ENCODE measurements at regions of chr6 and their contacts with region 1.

Region 1: DNA sequence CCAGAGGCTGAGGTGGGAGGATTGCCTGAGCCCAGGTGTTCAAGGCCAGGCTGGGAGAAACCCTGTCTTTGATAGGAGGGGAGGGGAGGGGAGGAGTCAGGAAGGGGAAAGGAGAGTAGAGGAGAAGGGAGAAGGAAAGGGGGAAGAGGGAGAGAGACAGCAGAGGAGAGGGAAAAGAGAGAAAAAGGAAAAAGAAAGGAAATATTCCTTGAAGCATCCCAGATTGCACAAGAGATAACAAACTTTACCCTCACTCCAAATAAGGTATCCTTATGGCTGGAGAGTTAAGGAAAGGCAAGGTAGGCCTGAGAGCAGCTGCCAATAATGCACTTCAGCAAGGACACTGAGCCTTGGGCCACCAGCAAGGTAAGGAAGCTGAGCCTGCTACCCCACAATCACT is 166.3 kb upstream of the SLC22A16 start:
- DNase-seq: no peak
- H3K4me3 ChIP-seq: no peak overlapping the region
- H3K27ac ChIP-seq: no peak overlapping the region
- H3K4me1 ChIP-seq: no peaks in the 10 kb centered on the region
- H3K27me3 ChIP-seq: no peaks in the 10 kb centered on the region
- CTCF ChIP-seq: no peak

Region 2: GRCh38 chr6:109447878-109448555 is 1194.7 kb before region 1 on chr6:
- CTCF ChIA-PET with region 1: no interaction called
- POLR2A ChIA-PET with region 1: interaction called, 15 read pairs
- intact Hi-C with region 1: no loop called
- DNase-seq: no peak
- H3K4me3 ChIP-seq: no peak overlapping the region
- H3K27ac ChIP-seq: no peak overlapping the region
- H3K4me1 ChIP-seq: no peaks in the 10 kb centered on the region
- H3K27me3 ChIP-seq: no peaks in the 10 kb centered on the region
- CTCF ChIP-seq: no peak